ENCODE measurements at regions of chr10 and their contacts with region 1.

Region 1: GRCh38 chr10:128150045-128150493 is 23.8 kb upstream of the MKI67 start:
- DNase-seq: peak; percentile 87

Region 2: GRCh38 chr10:127802608-127803007 is 347.5 kb before region 1 on chr10:
- intact Hi-C with region 1: loop called in 1 of 2 experiments (anchors 10 kb)
- DNase-seq: no peak

Region 3: DNA sequence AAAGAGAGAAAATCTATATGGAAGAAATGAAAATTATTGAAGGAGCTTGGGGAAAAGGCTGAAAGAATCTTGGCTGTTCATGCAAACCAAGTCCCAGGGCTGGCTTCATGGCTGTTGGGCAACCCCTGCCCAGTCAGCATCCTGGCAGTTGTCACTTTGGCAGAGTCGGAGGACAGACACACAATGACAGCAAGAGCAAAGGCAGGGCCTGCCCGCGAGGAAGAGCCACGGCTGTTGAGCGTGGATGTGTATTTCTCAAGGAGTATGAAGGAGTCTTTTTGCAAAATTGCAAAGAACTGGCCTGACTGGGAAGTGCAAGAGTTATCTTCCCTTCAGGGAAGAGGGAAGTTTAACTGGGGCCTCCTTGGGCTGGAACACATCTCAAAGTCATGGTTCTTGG is 231.5 kb before region 1 on chr10:
- intact Hi-C with region 1: no loop called
- DNase-seq: no peak

Region 4: GRCh38 chr10:128186959-128187787 is 37.1 kb after region 1 on chr10:
- intact Hi-C with region 1: no loop called
- DNase-seq: no peak

Region 5: GRCh38 chr10:129140921-129141885 is 991.1 kb after region 1 on chr10:
- intact Hi-C with region 1: loop called in 1 of 2 experiments (anchors 5 kb)
- DNase-seq: no peak

Measured in posterior vena cava (tissue), 2 donors.